Activated naive CD8-positive, alpha-beta T cell treated with anti-CD3 and anti-CD28 coated beads, Interleukin-2, amount 10 ng/mL, durations not matched to agents 7 days and 5 days (primary cell): ENCODE measurements at regions of chr3 and their contacts with region 1.

Region 1: GRCh38 chr3:43296565-43296964 is 10.2 kb downstream of the SNRK start:
- DNase-seq: no peak
- ATAC-seq: peak; percentile 89
- H3K4me3 Mint-ChIP-seq: peak overlapping the region; percentile 85
- H3K27ac Mint-ChIP-seq: peak overlapping the region; percentile 85
- H3K4me1 Mint-ChIP-seq: peaks cover 61% of the 10 kb centered on the region
- H3K27me3 Mint-ChIP-seq: no peaks in the 10 kb centered on the region

Region 2: DNA sequence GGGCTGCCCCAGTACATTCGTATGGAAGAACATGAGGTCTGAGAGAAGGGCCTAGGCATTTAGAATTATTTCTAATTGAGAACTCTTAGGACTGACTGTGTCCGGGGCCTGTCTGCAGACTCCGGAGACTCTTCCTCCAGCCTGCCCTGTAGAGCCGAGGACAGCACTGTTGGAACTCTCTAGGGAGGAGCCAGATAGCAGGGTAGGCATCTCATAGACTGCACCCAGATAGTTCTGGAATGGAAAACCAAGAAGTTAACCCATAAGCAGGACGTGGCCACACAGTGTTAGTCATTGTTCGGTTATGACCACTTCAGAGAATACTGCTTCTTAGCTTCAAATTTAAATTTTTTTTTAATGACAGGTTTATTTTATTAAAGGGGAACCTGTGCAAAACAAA is 49.3 kb after region 1 on chr3:
- POLR2A ChIA-PET with region 1: interaction called, 42 read pairs
- DNase-seq: no peak
- ATAC-seq: peak; percentile 51
- H3K4me3 Mint-ChIP-seq: peak overlapping the region; percentile 74
- H3K27ac Mint-ChIP-seq: peak overlapping the region; percentile 89
- H3K4me1 Mint-ChIP-seq: peaks cover 64% of the 10 kb centered on the region
- H3K27me3 Mint-ChIP-seq: no peaks in the 10 kb centered on the region